GM13976 (cell line): ENCODE measurements at regions of chr15 and their contacts with region 1.

Region 1: DNA sequence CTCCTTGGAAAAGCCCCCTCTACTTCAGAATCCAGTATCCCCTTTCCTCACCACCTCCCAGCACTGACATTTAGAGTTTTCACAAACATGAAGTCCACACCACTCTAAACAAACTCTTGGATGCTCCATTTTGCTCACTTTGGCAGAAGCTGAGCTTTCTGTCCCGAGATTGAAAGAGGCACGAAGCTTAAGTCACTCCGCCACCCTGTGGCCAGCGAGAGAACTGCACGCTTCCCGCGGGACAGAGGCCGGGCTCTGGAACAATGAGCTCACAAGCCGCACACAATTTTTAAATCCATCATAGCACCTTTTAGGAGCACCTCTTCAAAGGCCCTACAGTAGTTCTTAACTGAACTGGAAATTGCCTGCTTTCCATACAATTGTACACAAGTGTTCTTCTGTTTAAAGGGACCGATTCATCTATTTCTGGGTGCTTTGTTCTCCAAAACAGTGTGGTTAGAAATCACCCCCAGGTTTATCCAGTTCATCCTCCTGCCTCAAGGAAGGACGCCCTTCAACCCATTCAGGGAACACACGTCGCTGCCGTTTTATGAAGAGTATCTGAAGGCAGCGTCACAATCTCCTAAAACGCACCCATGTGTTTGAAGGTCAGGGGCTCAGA is 226.1 kb downstream of the VPS13C start:
- DNase-seq: peak; percentile 78
- CTCF ChIP-seq: peak; percentile 92

Region 2: GRCh38 chr15:60592371-60593169 is 1241.6 kb before region 1 on chr15:
- in situ Hi-C with region 1: loop called (anchors 25 kb)
- DNase-seq: peak; percentile 87
- CTCF ChIP-seq: peak; percentile 30

Region 3: GRCh38 chr15:61155741-61156700 is 678.2 kb before region 1 on chr15:
- in situ Hi-C with region 1: loop called (anchors 25 kb)
- DNase-seq: no peak
- CTCF ChIP-seq: no peak

Region 4: DNA sequence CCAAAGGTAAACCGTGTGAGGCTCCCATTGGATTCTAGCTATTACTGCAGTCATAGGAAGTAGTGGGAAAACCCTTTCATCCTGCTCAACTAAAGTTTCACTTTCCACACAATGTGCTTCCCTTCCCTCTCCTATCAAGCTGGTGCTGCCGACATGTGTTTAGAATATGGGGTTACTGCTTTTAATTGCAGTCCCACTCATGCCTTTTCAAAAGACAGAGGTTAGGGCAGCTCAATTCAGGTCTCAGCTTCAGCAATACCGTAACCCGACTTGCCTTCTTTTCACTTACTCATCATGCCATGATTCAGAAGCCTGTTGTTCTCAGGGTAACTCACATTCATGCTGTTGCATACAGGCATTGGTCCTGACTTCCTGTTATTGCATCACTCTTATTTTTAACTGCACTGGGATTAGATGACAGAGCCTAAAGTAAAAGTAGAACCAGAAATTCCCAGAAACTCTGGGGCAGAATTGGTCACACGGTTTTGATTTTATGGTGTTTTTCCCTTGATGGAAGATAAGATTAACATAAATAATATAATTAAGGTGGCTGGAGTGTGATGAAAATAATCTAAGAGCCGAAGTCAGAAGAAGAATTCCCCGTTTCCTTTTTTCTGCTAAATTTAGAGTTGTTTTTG is 285.2 kb after region 1 on chr15:
- in situ Hi-C with region 1: no loop called
- DNase-seq: no peak
- CTCF ChIP-seq: no peak